Prostate gland (tissue), 2 donors: ENCODE measurements at regions of chr10 and their contacts with region 1.

Region 1: DNA sequence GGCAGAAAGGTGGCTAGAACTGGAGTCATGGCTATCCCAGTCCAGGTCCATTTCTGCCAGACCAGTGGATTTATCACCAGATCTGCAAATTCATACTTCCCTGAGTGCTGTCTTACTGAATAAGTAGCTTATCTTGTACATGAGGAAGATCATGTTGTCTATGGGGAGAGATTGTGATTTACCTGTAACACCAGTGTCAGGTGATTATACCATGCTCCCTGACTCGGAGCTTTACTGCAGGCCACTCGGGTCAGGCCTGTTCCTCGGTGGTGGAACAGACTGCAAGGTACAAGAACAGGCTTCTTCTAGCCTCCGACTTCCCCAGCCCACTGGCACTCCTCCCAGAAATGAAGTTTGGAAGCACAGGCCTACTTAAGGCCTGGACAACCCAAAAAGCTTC is 42.6 kb upstream of the DLG5 start:
- DNase-seq: no peak
- H3K4me3 ChIP-seq: no peak overlapping the region
- H3K27ac ChIP-seq: peak overlapping the region; percentile 53 to 91
- H3K4me1 ChIP-seq: no peaks in the 10 kb centered on the region
- H3K27me3 ChIP-seq: no peaks in the 10 kb centered on the region
- CTCF ChIP-seq: no peak
- POLR2A ChIP-seq: no peak

Region 2: GRCh38 chr10:77726732-77727131 is 242.4 kb before region 1 on chr10:
- intact Hi-C with region 1: no loop called
- DNase-seq: no peak
- H3K4me3 ChIP-seq: no peak overlapping the region
- H3K27ac ChIP-seq: no peak overlapping the region
- H3K4me1 ChIP-seq: no peaks in the 10 kb centered on the region
- H3K27me3 ChIP-seq: no peaks in the 10 kb centered on the region
- CTCF ChIP-seq: no peak
- POLR2A ChIP-seq: no peak

Region 3: DNA sequence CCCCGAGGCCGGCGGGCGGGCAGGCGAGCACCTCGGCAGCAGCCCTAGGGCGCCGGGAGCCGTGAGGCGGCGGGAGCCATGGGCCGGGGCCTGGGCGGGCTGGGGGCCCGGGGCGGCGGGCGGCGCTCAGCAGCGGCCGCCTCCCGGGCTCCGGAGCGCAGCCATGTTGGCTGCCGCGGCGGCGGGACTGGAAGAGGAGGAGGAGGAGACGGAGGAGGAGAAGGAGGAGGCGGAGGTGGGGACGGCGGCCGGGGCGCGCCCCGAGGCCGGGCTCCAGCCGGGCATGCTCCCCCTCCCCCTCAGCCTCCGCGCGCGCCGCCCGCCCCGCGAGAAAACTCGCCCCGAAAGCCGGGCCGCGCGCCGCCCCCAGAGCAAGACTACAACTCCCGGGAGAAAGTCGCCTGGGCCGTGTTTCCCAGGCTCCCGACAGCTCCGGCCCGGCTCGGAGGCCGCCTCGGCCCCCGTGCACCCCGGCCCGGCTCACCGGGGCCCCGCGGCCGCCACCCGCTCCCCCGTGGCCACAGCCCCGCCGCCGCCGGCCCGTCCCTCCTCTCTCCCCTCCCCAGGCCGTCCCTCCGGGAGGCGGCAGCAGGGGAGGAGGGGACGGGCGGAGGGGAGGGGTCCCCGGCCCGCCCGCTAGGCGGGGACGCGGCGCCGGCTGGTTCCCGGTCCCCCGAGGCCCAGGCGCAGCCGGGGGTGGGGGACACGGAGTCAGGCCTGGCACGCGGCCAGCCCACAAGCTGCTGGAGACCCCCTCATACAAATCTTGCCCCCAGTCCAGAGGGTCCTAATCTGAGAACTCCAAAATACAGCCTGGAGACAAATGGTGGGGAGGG is 42.3 kb before region 1 on chr10 and contains the start of gene DLG5:
- intact Hi-C with region 1: loop called (anchors 1 kb)
- DNase-seq: peak; percentile 76
- H3K4me3 ChIP-seq: peak within 1 kb of the TSS; percentile 58 to 84
- H3K27ac ChIP-seq: peak within 1 kb of the TSS; percentile 93 to 95
- H3K4me1 ChIP-seq: peaks cover 4% of the 10 kb centered on the region
- H3K27me3 ChIP-seq: no peaks in the 10 kb centered on the region
- CTCF ChIP-seq: peak in 2 of 4 experiments; percentile 33 to 49
- POLR2A ChIP-seq: peak; percentile 43
- total RNA-seq, gene DLG5: 72.3 to 134 TPM